GM12878 (cell line): ENCODE measurements at regions of chr12 and their contacts with region 1.

Region 1: GRCh38 chr12:123580772-123581171 is 3.6 kb upstream of the TMED2 start:
- DNase-seq: no peak
- ATAC-seq: no peak
- H3K4me3 ChIP-seq: no peak overlapping the region
- H3K27ac ChIP-seq: no peak overlapping the region
- H3K4me1 ChIP-seq: peaks cover 8% of the 10 kb centered on the region
- H3K27me3 ChIP-seq: no peaks in the 10 kb centered on the region
- CTCF ChIP-seq: no peak
- EP300 ChIP-seq: no peak
- POLR2A ChIP-seq: no peak
- RAD21 ChIP-seq: no peak

Region 2: DNA sequence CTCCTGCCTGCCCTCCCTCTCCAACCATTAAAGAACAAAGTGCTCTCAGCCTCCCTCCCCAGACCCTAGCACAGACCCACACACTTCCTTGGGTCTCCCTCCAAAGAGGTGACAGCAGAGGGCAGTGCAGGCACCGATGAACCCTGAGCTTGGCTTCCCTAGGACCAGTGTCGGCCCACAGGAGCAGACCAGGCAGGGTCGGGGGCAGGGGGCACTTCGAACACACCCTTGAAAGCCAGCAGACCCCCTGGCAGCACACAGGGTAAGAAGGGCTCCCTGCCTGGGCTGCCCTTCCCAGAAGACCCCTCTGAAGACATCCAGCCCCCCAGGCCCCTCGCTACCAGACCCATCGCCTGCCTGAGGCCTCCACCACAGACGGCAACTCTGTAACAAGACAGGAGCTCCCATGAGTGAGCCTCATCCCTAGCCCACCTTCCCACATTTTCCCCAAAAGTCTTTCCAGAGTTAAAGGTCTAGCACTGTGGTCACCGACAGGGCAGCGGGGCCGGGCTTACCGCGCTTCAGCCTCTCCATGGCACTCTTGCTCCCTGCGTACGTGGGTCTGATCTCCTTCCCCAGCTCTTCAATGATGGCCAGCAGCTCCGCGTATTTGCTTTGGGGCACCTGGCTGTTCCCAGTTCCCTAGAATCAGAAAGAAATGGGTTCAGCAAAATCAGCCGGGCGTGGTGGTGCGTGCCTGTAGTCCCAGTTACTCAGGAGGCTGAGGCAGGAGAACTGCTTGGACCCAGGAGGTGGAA is 315.9 kb before region 1 on chr12:
- CTCF ChIA-PET with region 1: interaction called, 12 read pairs
- POLR2A ChIA-PET with region 1: no interaction called
- RAD21 ChIA-PET with region 1: interaction called, 3 read pairs
- SMC1A ChIA-PET with region 1: interaction called, 4 read pairs
- in situ Hi-C with region 1: loop called (anchors 5 kb)
- intact Hi-C with region 1: loop called (anchors 2 kb)
- DNase-seq: no peak
- ATAC-seq: peak; percentile 44
- H3K4me3 ChIP-seq: no peak overlapping the region
- H3K27ac ChIP-seq: no peak overlapping the region
- H3K4me1 ChIP-seq: peaks cover 14% of the 10 kb centered on the region
- H3K27me3 ChIP-seq: no peaks in the 10 kb centered on the region
- CTCF ChIP-seq: peak; percentile 35 to 45 (median 43); a peak in 3 of 6 replicates
- EP300 ChIP-seq: no peak
- POLR2A ChIP-seq: no peak
- RAD21 ChIP-seq: peak; percentile 38

Region 3: DNA sequence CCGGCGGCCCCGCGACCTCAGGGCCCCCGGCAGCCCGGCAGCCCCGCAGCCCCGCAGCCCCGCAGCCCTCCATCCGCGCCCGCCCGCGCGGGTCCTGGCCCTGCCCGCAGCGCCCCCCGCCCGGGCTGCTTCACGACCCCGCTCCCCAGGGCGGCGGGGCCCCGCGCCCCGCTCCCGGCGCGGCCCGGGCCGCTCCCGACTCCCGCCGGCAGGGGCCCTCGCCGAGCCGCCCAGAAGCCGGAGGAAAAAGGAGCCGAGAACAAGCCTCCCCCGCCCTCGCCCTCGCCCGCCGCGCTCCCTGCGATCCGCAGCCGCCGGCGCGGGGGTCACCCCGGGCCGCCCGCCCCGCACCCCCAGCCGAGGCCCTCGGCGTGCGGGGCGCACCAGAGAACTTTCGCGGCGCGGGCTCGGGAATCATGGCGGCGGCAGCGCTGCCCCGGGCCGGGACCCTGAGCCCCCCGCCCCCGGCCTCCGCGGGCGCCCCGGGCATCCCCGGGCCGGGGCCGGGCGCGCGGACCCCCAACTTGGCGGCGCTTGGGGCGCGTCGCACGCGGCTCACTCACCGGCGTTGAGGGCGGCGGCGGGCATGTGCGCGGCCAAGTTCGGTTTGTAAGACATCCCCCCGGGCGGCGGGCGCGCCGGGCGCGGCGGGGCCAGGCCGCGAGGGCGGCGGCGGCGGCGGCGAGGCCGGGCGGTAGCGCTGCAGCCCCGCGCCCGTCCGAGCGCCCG is 309.6 kb before region 1 on chr12:
- CTCF ChIA-PET with region 1: interaction called, 9 read pairs
- POLR2A ChIA-PET with region 1: no interaction called
- RAD21 ChIA-PET with region 1: interaction called, 3 read pairs
- SMC1A ChIA-PET with region 1: interaction called, 4 read pairs
- in situ Hi-C with region 1: loop called (anchors 5 kb)
- intact Hi-C with region 1: loop called (anchors 2 kb)
- DNase-seq: no peak
- ATAC-seq: peak; percentile 67
- H3K4me3 ChIP-seq: peak overlapping the region; percentile 95; the same call in 1 of the 2 replicates
- H3K27ac ChIP-seq: peak overlapping the region; percentile 82
- H3K4me1 ChIP-seq: peaks cover 17% of the 10 kb centered on the region
- H3K27me3 ChIP-seq: no peaks in the 10 kb centered on the region
- CTCF ChIP-seq: peak; percentile 28 to 76 (median 60); a peak in 4 of 6 replicates
- EP300 ChIP-seq: no peak
- POLR2A ChIP-seq: no peak
- RAD21 ChIP-seq: peak; percentile 74

Region 4: GRCh38 chr12:123436017-123436964 is 144.5 kb before region 1 on chr12 and contains the start of gene RILPL2:
- CTCF ChIA-PET with region 1: no interaction called
- POLR2A ChIA-PET with region 1: no interaction called
- RAD21 ChIA-PET with region 1: interaction called, 3 read pairs
- SMC1A ChIA-PET with region 1: no interaction called
- in situ Hi-C with region 1: no loop called
- intact Hi-C with region 1: loop called (anchors 5 kb)
- DNase-seq: peak; percentile 86
- ATAC-seq: peak; percentile 84
- H3K4me3 ChIP-seq: peak within 1 kb of the TSS; percentile 82
- H3K27ac ChIP-seq: peak within 1 kb of the TSS; percentile 95
- H3K4me1 ChIP-seq: peaks cover 2% of the 10 kb centered on the region; the same call in 1 of the 2 replicates
- H3K27me3 ChIP-seq: no peaks in the 10 kb centered on the region
- CTCF ChIP-seq: no peak
- EP300 ChIP-seq: no peak; a peak in 1 of 4 replicates
- POLR2A ChIP-seq: peak; percentile 81
- RAD21 ChIP-seq: no peak; the same call in 1 of the 2 replicates
- polyA plus RNA-seq, gene RILPL2: 3.5 to 8.3 TPM